Calu3 (cell line): ENCODE measurements at regions of chr12 and their contacts with region 1.

Region 1: DNA sequence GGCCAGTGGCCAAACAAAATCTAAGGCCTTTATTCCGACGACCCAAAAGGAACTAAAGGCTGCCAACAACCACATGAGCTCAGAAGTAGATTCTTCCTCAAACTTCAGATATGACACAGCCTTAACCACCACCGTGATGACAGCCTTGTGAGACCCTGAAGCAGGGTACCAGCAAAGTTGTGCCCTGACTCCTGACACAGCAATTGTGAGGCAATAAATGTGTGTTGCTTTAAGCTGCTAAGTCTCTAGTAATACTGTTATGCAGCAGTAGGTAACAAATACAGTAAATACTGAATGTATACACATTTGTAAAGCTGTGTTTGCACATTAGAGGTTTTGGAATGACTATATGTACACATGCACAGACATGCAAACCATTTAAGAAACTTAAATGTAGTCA is 10.7 kb upstream of the SLC6A13 start:
- DNase-seq: no peak
- H3K4me3 Mint-ChIP-seq: no peak overlapping the region
- H3K27ac Mint-ChIP-seq: no peak overlapping the region
- H3K4me1 Mint-ChIP-seq: no peaks in the 10 kb centered on the region
- H3K27me3 Mint-ChIP-seq: no peaks in the 10 kb centered on the region
- CTCF ChIP-seq: no peak

Region 2: GRCh38 chr12:524225-524951 is 251.0 kb after region 1 on chr12:
- CTCF ChIA-PET with region 1: no interaction called
- intact Hi-C with region 1: no loop called
- DNase-seq: peak; percentile 39
- H3K4me3 Mint-ChIP-seq: no peak overlapping the region
- H3K27ac Mint-ChIP-seq: peak overlapping the region; percentile 9
- H3K4me1 Mint-ChIP-seq: peaks cover 10% of the 10 kb centered on the region
- H3K27me3 Mint-ChIP-seq: no peaks in the 10 kb centered on the region
- CTCF ChIP-seq: no peak

Region 3: GRCh38 chr12:558580-558979 is 285.2 kb after region 1 on chr12:
- CTCF ChIA-PET with region 1: interaction called, 11 read pairs
- intact Hi-C with region 1: no loop called
- DNase-seq: no peak
- H3K4me3 Mint-ChIP-seq: no peak overlapping the region
- H3K27ac Mint-ChIP-seq: no peak overlapping the region
- H3K4me1 Mint-ChIP-seq: no peaks in the 10 kb centered on the region
- H3K27me3 Mint-ChIP-seq: peaks cover 29% of the 10 kb centered on the region
- CTCF ChIP-seq: no peak